ENCODE measurements at regions of chr5 and their contacts with region 1.

Region 1: DNA sequence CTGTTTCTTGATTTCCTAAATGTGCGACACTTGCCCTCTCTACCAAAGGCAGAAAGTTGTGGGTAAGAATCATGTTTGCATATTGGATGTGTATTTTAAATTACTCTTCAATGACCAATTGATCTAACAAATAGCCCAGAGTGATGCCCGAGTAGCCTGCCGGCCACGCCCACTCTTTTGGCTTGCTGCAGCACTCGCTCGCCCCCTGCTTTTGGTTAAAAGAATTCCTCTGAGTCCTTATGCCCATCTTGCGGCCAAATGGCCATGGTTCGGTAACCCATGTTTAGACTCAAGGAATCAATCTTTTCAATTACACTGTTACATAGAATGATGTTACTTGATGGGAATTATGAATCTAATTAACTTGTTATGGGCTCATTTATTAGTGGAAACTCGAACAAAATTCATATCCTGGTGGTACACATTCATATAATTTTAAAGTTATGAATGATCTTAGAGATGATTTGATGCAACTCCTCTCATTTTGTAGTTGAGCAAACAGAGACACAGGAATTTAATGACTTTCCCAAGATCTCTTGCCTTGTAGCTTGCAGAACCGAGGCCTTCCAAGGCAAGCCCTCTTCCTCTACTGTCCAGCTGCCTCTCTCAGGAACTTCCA is 36.5 kb downstream of the PPIC start:
- DNase-seq: peak; percentile 66 to 74 (median 72)
- ATAC-seq: peak; percentile 82 to 91 (median 87)
- H3K4me3 ChIP-seq: no peak overlapping the region
- H3K27ac ChIP-seq: no peak overlapping the region
- H3K4me1 ChIP-seq: peaks cover 0 to 15% (median 4%) of the 10 kb centered on the region in 4 donors
- H3K27me3 ChIP-seq: no peaks in the 10 kb centered on the region
- CTCF ChIP-seq: peak; percentile 63 to 87 (median 73)
- POLR2A ChIP-seq: no peak

Region 2: GRCh38 chr5:122907238-122907637 is 92.8 kb before region 1 on chr5:
- intact Hi-C with region 1: loop called in 1 of 2 experiments (anchors 10 kb)
- DNase-seq: no peak
- ATAC-seq: no peak
- H3K4me3 ChIP-seq: no peak overlapping the region
- H3K27ac ChIP-seq: no peak overlapping the region
- H3K4me1 ChIP-seq: no peaks in the 10 kb centered on the region
- H3K27me3 ChIP-seq: no peaks in the 10 kb centered on the region
- CTCF ChIP-seq: no peak
- POLR2A ChIP-seq: no peak